ENCODE measurements at regions of chr2 and their contacts with region 1.

Region 1: DNA sequence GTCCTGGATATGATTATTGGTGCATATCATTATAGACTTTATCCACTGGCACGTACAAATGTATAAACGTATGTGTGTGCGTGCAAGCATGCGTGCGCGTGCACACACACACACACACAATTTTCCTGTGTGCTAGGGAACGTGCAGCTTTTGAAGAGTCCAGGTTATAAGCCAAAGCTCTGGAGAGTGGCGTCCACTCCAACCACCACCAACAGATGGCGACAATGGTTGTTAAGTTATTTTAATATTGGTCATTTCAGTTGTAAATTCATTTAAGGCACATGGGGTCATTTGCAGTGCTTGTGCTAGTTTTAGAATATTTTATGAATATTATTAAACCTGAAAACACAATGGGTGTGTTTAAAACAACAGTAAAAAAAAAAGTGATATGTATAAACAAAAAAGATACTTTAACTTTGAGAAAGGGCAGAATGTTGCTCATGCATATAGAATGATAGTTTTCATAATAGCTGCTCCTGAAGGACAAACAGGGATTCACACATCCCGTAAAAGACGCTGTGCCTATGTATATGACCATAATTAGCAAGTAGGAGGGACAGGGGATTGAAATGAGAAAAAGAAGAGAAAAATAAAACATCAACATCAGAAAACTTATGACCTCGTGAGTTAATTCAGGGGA is 124.2 kb upstream of the ITGB6 start:
- DNase-seq: peak; percentile 71
- ATAC-seq: peak; percentile 48

Region 2: GRCh38 chr2:160241251-160242137 is 82.8 kb before region 1 on chr2:
- intact Hi-C with region 1: no loop called
- DNase-seq: no peak
- ATAC-seq: peak; percentile 59

Region 3: GRCh38 chr2:160406591-160407392 is 82.5 kb after region 1 on chr2:
- intact Hi-C with region 1: loop called (anchors 10 kb)
- DNase-seq: peak; percentile 80
- ATAC-seq: peak; percentile 45

Region 4: GRCh38 chr2:160970052-160970965 is 646.0 kb after region 1 on chr2:
- intact Hi-C with region 1: loop called (anchors 10 kb)
- DNase-seq: no peak
- ATAC-seq: peak; percentile 80